Testis (tissue), 5 donors: ENCODE measurements at regions of chr20 and their contacts with region 1.

Region 1: GRCh38 chr20:23622839-23623343 is 14.9 kb downstream of the CST3 start:
- DNase-seq: peak; percentile 69
- H3K4me3 ChIP-seq: no peak overlapping the region
- H3K27ac ChIP-seq: peak overlapping the region; percentile 63 to 81
- H3K4me1 ChIP-seq: peaks cover 22% of the 10 kb centered on the region
- H3K27me3 ChIP-seq: no peaks in the 10 kb centered on the region
- CTCF ChIP-seq: no peak
- POLR2A ChIP-seq: no peak

Region 2: DNA sequence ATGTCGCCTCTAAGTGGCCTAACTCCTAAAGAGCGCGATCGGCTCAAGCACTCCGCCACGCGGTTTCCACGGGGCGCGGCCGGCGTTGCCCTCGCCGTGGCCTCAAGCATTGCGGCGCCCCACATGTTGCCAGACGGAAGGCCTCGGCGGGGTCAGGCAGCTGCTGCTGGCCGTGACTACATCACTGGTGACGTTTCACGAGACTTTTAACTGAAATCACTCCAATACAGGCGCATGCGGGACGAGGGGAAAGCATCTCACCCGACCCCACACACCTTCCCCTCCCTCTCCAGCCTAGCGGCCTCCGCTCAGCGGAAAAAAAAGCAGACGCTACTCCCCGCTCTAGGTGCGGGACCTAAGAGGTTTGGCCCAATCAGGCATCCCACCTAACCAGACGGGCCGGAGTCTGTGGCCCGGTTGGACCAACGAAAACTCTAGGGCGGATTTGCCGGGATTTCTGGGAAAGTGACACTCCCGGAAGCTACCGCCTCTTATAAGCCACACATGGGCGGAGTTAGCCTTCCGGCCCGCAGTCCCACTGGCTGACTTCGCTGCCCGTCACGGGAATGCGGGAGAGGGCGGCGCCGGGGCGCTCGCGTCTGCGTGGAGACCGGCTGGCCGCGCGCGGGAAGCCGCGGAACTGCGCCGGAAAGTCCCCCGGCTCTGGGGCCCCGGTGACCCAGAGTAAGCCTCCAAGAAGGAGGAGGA is 272.5 kb before region 1 on chr20 and contains the start of gene NXT1:
- intact Hi-C with region 1: loop called (anchors 10 kb)
- DNase-seq: peak; percentile 98
- H3K4me3 ChIP-seq: peak within 1 kb of the TSS; percentile 89 to 98
- H3K27ac ChIP-seq: peak within 1 kb of the TSS; percentile 95 to 96
- H3K4me1 ChIP-seq: peaks cover 10% of the 10 kb centered on the region
- H3K27me3 ChIP-seq: no peaks in the 10 kb centered on the region
- CTCF ChIP-seq: peak in 1 of 3 experiments; percentile 28
- POLR2A ChIP-seq: peak; percentile 65
- total RNA-seq, gene NXT1: 40.3 to 48.0 TPM

Region 3: DNA sequence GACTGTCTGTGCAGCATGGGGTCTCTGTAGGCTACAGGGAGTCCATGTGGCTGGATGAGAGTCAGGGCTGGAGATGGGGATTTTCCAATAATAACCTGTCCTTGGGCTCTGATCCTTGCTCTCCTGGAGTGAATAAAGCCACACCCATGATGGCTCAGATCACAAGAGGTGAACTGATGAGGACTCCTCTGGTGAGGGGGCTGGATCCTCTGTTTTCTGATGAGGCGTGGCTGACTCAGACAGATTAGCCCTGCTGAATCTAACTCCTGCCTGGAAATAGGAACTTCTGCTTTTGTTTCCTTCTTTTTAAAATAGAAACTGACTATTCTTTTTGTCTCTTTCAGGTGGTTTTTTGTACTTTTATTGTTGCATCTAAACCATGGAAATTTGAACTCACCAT is 81.6 kb before region 1 on chr20:
- intact Hi-C with region 1: no loop called
- DNase-seq: no peak
- H3K4me3 ChIP-seq: no peak overlapping the region
- H3K27ac ChIP-seq: no peak overlapping the region
- H3K4me1 ChIP-seq: peaks cover 2% of the 10 kb centered on the region
- H3K27me3 ChIP-seq: no peaks in the 10 kb centered on the region
- CTCF ChIP-seq: no peak
- POLR2A ChIP-seq: no peak

Region 4: DNA sequence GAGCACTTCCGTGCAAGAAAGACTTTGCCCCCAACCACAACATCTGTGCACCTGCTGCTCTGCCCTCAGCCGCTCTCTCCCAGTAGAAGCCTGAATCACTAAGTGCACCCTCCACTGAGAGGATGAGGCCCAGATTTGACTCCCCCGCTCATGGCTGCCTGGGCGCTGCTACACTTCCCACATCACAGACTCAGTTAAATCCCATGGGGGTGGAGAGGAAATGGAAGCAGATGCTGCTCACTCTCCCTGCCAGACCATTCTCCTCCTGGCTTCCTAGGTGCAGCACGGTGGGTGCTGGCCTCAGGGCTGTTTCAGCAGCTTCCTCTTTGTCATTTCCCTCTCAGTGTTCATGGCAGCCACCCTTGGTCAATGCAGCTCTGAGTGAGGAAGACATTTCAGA is 251.9 kb after region 1 on chr20:
- intact Hi-C with region 1: no loop called
- DNase-seq: no peak
- H3K4me3 ChIP-seq: no peak overlapping the region
- H3K27ac ChIP-seq: no peak overlapping the region
- H3K4me1 ChIP-seq: no peaks in the 10 kb centered on the region
- H3K27me3 ChIP-seq: no peaks in the 10 kb centered on the region
- CTCF ChIP-seq: no peak
- POLR2A ChIP-seq: no peak

Region 5: DNA sequence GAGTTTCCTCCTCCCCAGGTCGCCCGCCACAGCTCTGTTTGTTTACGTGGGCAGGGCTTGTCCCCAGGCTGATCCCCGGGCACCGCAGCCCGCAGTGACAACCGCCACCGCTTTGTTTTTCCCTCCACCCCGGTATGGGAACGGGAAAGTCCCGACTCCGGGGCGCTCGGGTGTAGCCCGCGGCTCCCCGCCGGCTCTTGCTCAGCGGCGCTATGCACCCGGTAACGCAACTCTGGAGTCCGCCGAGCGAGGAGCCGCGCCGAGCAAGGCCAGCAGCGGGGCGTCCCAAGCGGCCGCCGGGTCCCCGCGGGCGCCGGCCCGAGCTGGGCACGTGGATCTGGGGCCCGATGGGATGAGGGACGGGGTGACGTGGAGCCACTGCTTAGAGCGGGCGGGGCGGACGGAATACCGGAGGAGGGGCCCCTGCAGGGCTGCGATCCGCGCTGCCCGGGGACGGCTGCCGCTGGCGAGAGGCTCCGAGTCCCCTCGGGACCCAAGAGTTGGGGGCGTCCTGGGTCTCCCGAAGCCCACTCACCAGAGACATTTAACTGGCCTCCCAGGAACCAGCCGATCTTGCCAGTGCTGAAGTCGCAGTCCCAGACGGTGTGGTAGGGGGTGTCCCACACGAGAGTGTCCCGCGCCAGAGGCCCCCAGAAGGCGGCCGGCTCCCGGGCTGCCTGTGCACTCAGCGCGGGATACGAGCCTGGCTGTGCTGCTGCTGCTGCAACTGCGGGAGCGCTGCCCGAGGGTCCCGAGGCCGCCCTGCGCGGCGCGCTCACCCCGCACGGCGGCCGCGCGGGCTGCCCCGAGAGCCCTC is 1434.6 kb after region 1 on chr20:
- intact Hi-C with region 1: loop called (anchors 10 kb)
- DNase-seq: peak; percentile 74
- H3K4me3 ChIP-seq: peak overlapping the region; percentile 79 to 88
- H3K27ac ChIP-seq: peak overlapping the region; percentile 83 to 92
- H3K4me1 ChIP-seq: peaks cover 50% of the 10 kb centered on the region
- H3K27me3 ChIP-seq: no peaks in the 10 kb centered on the region
- CTCF ChIP-seq: no peak
- POLR2A ChIP-seq: no peak